Dendritic cell treated with granulocyte-macrophage colony-stimulating factor and Interleukin-4, amounts not matched to agents 40 ng/mL and 50 ng/mL, for 4 days (primary cell): ENCODE measurements at regions of chr1 and their contacts with region 1.

Region 1: GRCh38 chr1:228139944-228140656 is at the start of gene GUK1:
- H3K4me3 Mint-ChIP-seq: peak within 1 kb of the TSS; percentile 82
- H3K27ac Mint-ChIP-seq: peak within 1 kb of the TSS; percentile 87
- H3K4me1 Mint-ChIP-seq: peaks cover 41% of the 10 kb centered on the region
- H3K27me3 Mint-ChIP-seq: no peaks in the 10 kb centered on the region

Region 2: GRCh38 chr1:228082135-228082891 is 57.8 kb before region 1 on chr1 and contains the start of gene ARF1:
- intact Hi-C with region 1: no loop called
- H3K4me3 Mint-ChIP-seq: peak within 1 kb of the TSS; percentile 92
- H3K27ac Mint-ChIP-seq: peak within 1 kb of the TSS; percentile 96
- H3K4me1 Mint-ChIP-seq: peaks cover 61% of the 10 kb centered on the region
- H3K27me3 Mint-ChIP-seq: peaks cover 2% of the 10 kb centered on the region

Region 3: DNA sequence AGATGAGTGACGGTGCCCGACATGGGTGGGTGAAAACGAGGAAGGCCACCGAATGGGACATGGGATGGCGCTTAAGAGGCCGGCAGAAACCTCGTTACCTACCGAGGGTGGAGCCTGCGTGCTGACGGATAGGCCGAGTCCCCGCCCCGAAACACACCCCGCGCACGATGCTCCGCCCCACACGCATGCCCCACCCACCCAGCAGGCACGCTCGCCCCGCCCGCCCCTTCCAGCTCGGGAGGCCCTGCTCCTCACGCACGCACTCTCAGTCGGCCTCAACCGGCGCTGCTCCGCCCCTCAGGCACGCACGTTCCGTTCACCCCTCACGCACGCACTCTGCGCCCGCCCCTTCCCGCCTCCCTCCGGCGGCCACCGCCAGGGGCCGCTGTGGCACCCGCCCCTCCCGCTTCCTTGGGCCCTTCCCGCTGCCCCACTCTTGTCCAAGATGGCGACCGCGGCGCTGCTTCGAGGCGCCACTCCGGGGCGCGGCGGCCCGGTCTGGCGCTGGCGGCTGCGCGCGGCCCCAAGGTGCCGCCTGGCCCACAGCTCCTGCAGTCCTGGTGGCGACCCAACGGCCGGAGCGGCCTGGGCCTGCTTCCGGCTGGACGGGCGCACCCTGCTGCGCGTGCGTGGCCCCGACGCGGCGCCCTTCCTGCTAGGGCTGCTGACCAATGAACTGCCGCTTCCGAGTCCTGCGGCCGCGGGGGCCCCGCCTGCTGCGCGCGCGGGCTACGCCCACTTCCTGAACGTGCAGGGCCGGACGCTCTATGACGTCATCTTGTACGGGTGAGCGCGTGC is 25.5 kb after region 1 on chr1 and contains the start of gene IBA57:
- intact Hi-C with region 1: loop called (anchors 1 kb)
- H3K4me3 Mint-ChIP-seq: peak within 1 kb of the TSS; percentile 83
- H3K27ac Mint-ChIP-seq: peak within 1 kb of the TSS; percentile 91
- H3K4me1 Mint-ChIP-seq: peaks cover 71% of the 10 kb centered on the region
- H3K27me3 Mint-ChIP-seq: peaks cover 21% of the 10 kb centered on the region